Activated CD4-positive, alpha-beta memory T cell treated with anti-CD3 and anti-CD28 coated beads, Interleukin-2, amount 10 ng/mL, durations not matched to agents 7 days and 5 days (primary cell): ENCODE measurements at regions of chr6 and their contacts with region 1.

Region 1: DNA sequence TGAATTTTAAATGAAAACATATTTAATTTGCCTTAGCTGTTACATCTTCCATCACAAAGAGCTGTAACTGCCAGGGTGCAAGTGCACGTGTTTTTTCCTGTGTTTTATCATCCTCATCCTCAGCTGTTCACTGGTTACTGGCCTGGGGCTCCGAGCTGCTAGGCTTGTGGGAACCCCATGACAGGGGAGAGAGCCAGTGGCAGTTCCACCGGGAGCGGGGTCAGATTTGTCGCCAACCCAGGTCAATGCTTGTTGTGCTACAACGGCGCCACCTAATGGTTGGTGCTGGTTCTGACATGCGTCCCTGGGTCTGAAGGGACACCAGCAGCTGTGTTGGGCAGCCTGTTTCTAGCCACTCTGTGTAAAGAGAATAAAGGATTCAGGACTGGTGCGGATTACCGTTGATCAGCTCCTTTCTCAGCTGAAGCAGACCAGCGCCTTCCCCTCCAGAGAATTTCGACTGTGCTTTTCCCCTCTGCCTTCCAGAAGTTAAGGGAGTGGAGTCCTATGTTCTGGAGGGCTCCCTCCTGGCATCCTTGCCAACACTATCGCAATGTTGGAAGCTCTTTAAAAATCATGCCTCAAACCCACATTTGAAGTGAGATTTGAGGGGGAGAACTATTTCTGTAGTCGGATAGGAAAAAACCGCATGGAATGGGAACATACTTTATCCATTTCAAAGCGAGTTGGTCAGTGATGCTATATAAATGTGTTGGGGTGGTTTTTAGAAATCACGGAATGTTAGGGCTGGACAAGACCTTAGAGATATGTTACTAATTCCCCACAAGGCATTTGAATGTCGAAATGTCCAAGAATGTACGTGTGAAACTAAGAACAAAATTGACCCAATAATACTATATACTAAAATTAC is 32.1 kb downstream of the SUMO4 start:
- DNase-seq: peak; percentile 91
- H3K4me3 Mint-ChIP-seq: peak overlapping the region; percentile 55
- H3K27ac Mint-ChIP-seq: peak overlapping the region; percentile 66
- H3K4me1 Mint-ChIP-seq: peaks cover 9% of the 10 kb centered on the region
- H3K27me3 Mint-ChIP-seq: no peaks in the 10 kb centered on the region

Region 2: GRCh38 chr6:149043476-149044130 is 388.5 kb before region 1 on chr6:
- CTCF ChIA-PET with region 1: interaction called, 16 read pairs
- POLR2A ChIA-PET with region 1: interaction called, 4 read pairs
- DNase-seq: peak; percentile 45
- H3K4me3 Mint-ChIP-seq: no peak overlapping the region
- H3K27ac Mint-ChIP-seq: no peak overlapping the region
- H3K4me1 Mint-ChIP-seq: peaks cover 55% of the 10 kb centered on the region
- H3K27me3 Mint-ChIP-seq: no peaks in the 10 kb centered on the region

Region 3: GRCh38 chr6:149075616-149076364 is 356.4 kb before region 1 on chr6:
- CTCF ChIA-PET with region 1: interaction called, 23 read pairs
- POLR2A ChIA-PET with region 1: interaction called, 4 read pairs
- DNase-seq: no peak
- H3K4me3 Mint-ChIP-seq: no peak overlapping the region
- H3K27ac Mint-ChIP-seq: peak overlapping the region; percentile 38
- H3K4me1 Mint-ChIP-seq: peaks cover 46% of the 10 kb centered on the region
- H3K27me3 Mint-ChIP-seq: no peaks in the 10 kb centered on the region

Region 4: GRCh38 chr6:149419696-149420404 is 12.3 kb before region 1 on chr6:
- CTCF ChIA-PET with region 1: interaction called, 20 read pairs
- POLR2A ChIA-PET with region 1: interaction called, 8 read pairs
- DNase-seq: no peak
- H3K4me3 Mint-ChIP-seq: no peak overlapping the region
- H3K27ac Mint-ChIP-seq: no peak overlapping the region
- H3K4me1 Mint-ChIP-seq: peaks cover 45% of the 10 kb centered on the region
- H3K27me3 Mint-ChIP-seq: no peaks in the 10 kb centered on the region

Region 5: DNA sequence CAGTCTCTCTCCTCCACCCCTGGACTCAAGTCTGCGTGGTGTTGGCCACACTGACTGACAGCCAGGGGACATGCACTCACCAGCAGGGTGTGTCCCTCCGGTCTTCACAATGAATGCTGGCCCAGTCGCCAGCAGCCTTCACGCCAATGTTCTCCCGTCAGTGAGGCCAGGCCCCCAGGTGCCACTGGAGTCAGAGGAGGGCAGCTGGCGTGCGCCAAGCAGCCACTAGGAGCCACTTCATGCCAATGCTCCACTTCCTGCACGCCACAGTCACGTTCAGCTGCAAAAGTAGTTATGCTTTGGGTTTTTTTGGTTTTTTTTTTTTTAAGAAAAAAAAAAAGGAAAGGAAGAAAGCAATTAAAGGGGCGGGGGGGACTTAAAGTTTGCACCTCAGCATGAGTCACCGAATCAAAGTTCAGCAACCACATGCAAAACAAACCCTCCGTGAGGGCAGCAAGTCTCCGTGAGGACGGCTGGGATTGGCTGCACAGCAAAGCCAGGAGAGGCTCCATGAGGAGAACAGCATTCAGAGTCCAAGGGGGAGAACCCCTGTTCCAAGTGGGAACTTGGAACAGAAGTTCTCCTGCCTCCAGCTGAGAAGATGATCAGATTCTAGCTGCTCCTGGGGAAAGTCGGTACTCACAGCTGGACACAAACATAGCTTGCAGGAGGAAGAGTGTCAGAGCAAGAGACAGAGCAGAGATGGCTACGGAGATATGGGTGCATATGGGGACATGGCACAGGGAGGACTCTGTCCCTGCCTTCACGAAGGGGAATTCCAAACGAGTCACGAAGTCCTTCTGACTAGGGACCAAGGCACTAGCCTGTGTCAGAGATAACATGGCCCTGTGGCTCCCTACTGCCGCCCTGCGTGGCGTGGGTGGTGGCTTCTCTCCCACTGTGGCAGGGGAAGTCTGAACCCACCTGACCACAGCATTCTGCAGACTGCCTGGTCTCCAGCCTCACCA is 52.9 kb after region 1 on chr6 and contains the start of gene ZC3H12D:
- CTCF ChIA-PET with region 1: interaction called, 4 read pairs
- POLR2A ChIA-PET with region 1: interaction called, 10 read pairs
- DNase-seq: peak; percentile 86
- H3K4me3 Mint-ChIP-seq: peak within 1 kb of the TSS; percentile 98
- H3K27ac Mint-ChIP-seq: peak within 1 kb of the TSS; percentile 96
- H3K4me1 Mint-ChIP-seq: peaks cover 41% of the 10 kb centered on the region
- H3K27me3 Mint-ChIP-seq: no peaks in the 10 kb centered on the region
- total RNA-seq, gene ZC3H12D: 37.4 to 37.6 TPM

Region 6: GRCh38 chr6:149586149-149586548 is 154.0 kb after region 1 on chr6:
- CTCF ChIA-PET with region 1: no interaction called
- POLR2A ChIA-PET with region 1: no interaction called
- DNase-seq: no peak
- H3K4me3 Mint-ChIP-seq: no peak overlapping the region
- H3K27ac Mint-ChIP-seq: no peak overlapping the region
- H3K4me1 Mint-ChIP-seq: no peaks in the 10 kb centered on the region
- H3K27me3 Mint-ChIP-seq: no peaks in the 10 kb centered on the region

Region 7: DNA sequence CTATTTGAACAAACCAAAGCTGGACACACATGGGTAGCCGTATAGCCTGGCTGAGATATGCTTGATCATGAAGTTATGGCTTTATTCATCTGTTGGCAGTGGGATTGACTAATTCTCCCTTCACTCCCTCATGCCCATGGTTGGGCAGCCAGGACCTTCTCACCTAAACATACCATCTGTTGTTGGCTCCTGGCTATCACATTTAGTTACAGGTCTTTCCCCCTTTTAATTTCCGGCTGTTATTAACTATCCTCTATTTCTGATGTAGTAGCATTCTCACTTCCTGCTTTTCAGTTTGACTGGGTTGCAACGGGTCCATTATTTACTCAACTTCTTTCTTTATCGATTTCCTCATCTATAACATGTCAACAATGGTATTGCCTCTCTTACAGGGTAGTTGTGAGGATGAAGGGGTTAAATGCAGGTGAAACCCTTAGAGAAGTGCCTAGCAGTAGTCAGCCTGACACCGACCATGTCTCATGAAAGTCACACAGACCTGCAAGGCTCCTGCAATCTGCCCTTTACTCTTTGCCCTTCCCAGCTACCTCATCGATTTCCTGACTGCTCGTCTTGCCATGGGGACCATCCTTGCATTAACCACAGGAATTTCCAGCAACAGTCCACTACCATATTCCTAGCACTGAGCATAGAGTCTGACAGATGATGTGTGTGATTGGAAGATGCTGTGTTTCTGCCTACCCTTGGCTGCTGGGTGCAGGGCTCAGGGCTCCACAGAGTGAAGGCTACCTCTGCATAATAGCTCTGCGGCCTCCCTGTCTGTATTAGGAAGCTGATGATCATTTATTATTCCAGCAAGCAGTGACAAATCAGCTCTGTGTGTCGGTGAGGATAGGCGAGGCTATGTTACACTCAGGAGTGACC is 753.0 kb after region 1 on chr6:
- CTCF ChIA-PET with region 1: no interaction called
- POLR2A ChIA-PET with region 1: no interaction called
- DNase-seq: no peak
- H3K4me3 Mint-ChIP-seq: no peak overlapping the region
- H3K27ac Mint-ChIP-seq: no peak overlapping the region
- H3K4me1 Mint-ChIP-seq: peaks cover 11% of the 10 kb centered on the region
- H3K27me3 Mint-ChIP-seq: peaks cover 19% of the 10 kb centered on the region